Thyroid gland (tissue), 4 donors: ENCODE measurements at regions of chr2 and their contacts with region 1.

Region 1: DNA sequence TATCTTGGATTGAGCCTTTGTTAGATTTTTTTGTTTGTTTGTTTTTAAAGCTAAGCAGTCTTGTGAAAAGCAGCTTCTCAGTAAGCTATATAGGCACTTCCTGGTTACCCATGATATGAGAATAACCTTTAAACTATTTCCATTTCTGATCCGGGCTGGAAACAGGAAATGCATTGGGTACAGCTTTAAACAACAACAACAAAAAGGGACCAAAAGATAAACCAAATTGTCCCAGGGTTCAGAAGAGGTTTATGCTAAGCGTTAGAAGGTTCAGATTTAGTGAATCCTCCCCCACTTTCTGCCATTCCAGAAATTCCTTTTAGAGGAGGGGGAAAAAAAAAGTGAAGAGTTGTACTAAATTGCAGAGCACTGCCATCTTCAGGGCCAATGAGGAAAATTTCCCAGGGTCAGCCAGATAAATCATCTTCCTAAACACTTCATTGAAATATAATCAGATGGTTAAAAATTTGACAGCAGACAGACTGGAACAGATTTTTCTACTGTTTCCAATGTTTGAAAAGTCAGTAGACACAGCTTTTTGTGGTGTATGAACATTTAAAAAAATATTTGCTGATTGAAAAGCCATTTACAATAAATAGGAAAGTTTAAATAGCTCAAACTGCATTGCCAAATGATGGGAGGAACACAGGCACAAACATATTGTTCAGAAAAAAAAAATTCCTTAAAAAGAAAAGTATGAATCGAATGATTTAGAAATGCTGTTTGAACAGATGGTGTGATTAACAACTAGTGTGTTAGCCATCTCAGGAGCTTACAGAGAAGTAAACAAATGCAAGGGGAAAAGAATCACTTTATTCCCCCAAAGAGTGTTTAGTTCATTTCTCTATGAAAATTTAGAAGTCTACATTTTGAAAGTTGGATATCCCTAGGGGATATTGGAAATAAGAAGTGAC is 189.9 kb upstream of the TANK start:
- DNase-seq: peak; percentile 49 to 56
- H3K4me3 ChIP-seq: no peak overlapping the region
- H3K27ac ChIP-seq: peak overlapping the region; percentile 76 to 85 (median 80)
- H3K4me1 ChIP-seq: peaks cover 0 to 9% of the 10 kb centered on the region in 2 donors
- H3K27me3 ChIP-seq: no peaks in the 10 kb centered on the region
- CTCF ChIP-seq: peak; percentile 41 to 94 (median 77)
- POLR2A ChIP-seq: no peak

Region 2: GRCh38 chr2:160109936-160110673 is 860.2 kb before region 1 on chr2:
- intact Hi-C with region 1: loop called (anchors 10 kb)
- DNase-seq: peak; percentile 70 to 75
- H3K4me3 ChIP-seq: no peak overlapping the region
- H3K27ac ChIP-seq: peak overlapping the region in 1 of 3 donors; percentile 5
- H3K4me1 ChIP-seq: no peaks in the 10 kb centered on the region
- H3K27me3 ChIP-seq: no peaks in the 10 kb centered on the region
- CTCF ChIP-seq: peak; percentile 37 to 88 (median 78)
- POLR2A ChIP-seq: no peak

Region 3: DNA sequence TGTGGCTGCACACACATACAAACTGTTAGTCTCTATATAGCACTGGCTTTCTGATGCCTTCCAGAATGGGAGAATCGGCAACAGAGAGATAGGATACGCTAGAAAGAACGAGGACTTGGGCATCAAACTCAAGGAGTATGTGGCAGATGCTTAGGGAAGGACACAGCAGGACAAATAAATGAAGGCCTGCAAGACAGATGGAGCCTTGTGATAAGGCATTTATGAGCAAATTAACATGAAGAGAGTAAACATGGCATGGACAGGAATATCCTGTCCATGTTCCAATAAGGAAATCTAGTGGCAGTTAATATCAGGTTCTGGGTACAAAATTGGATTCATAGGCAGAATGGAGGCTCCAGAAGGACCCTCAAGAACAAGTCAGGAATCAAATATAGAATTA is 790.9 kb after region 1 on chr2:
- intact Hi-C with region 1: no loop called
- DNase-seq: no peak
- H3K4me3 ChIP-seq: no peak overlapping the region
- H3K27ac ChIP-seq: no peak overlapping the region
- H3K4me1 ChIP-seq: no peaks in the 10 kb centered on the region
- H3K27me3 ChIP-seq: no peaks in the 10 kb centered on the region
- CTCF ChIP-seq: no peak
- POLR2A ChIP-seq: no peak